CD8-positive, alpha-beta memory T cell (primary cell): ENCODE measurements at regions of chr6 and their contacts with region 1.

Region 1: GRCh38 chr6:149499066-149499465 is 14.3 kb upstream of the ZC3H12D start:
- DNase-seq: no peak
- H3K4me3 ChIP-seq: no peak overlapping the region
- H3K4me3 Mint-ChIP-seq: no peak overlapping the region
- H3K27ac ChIP-seq: no peak overlapping the region
- H3K27ac Mint-ChIP-seq: peak overlapping the region in 6 of 8 donors; percentile 3 to 70 (median 24)
- H3K4me1 ChIP-seq: peaks cover 32% of the 10 kb centered on the region
- H3K4me1 Mint-ChIP-seq: peaks cover 14 to 53% (median 40%) of the 10 kb centered on the region in 3 donors
- H3K27me3 ChIP-seq: no peaks in the 10 kb centered on the region
- H3K27me3 Mint-ChIP-seq: no peaks in the 10 kb centered on the region

Region 2: GRCh38 chr6:149473080-149474052 is 25.7 kb before region 1 on chr6:
- CTCF ChIA-PET with region 1: no interaction called
- POLR2A ChIA-PET with region 1: no interaction called
- DNase-seq: peak in 1 of 5 donors; percentile 36
- H3K4me3 ChIP-seq: no peak overlapping the region
- H3K4me3 Mint-ChIP-seq: peak overlapping the region in 5 of 7 donors; percentile 5 to 62 (median 33)
- H3K27ac ChIP-seq: no peak overlapping the region
- H3K27ac Mint-ChIP-seq: peak overlapping the region in 6 of 8 donors; percentile 22 to 85 (median 66)
- H3K4me1 ChIP-seq: peaks cover 30% of the 10 kb centered on the region
- H3K4me1 Mint-ChIP-seq: peaks cover 29 to 68% (median 51%) of the 10 kb centered on the region in 3 donors
- H3K27me3 ChIP-seq: no peaks in the 10 kb centered on the region
- H3K27me3 Mint-ChIP-seq: no peaks in the 10 kb centered on the region

Region 3: GRCh38 chr6:149513915-149514314 is 14.8 kb after region 1 on chr6:
- CTCF ChIA-PET with region 1: interaction called, 11 read pairs
- POLR2A ChIA-PET with region 1: interaction called, 4 read pairs
- DNase-seq: no peak
- H3K4me3 ChIP-seq: no peak overlapping the region
- H3K4me3 Mint-ChIP-seq: no peak overlapping the region
- H3K27ac ChIP-seq: no peak overlapping the region
- H3K27ac Mint-ChIP-seq: peak overlapping the region in 2 of 8 donors; percentile 33 to 50
- H3K4me1 ChIP-seq: peaks cover 12% of the 10 kb centered on the region
- H3K4me1 Mint-ChIP-seq: peaks cover 20 to 47% (median 35%) of the 10 kb centered on the region in 3 donors
- H3K27me3 ChIP-seq: no peaks in the 10 kb centered on the region
- H3K27me3 Mint-ChIP-seq: no peaks in the 10 kb centered on the region